ENCODE measurements at regions of chr2 and their contacts with region 1.

Region 1: GRCh38 chr2:159712143-159712928 is at the start of gene MARCHF7:
- DNase-seq: peak; percentile 91 to 99
- H3K4me3 ChIP-seq: peak within 1 kb of the TSS; percentile 84 to 96 (median 92)
- H3K27ac ChIP-seq: peak within 1 kb of the TSS; percentile 99
- H3K4me1 ChIP-seq: peaks cover 0 to 8% (median 4%) of the 10 kb centered on the region in 4 experiments; a peak in 3 of 7 replicates
- H3K27me3 ChIP-seq: no peaks in the 10 kb centered on the region
- CTCF ChIP-seq: peak; percentile 24 to 45 (median 41)
- EP300 ChIP-seq: no peak; a peak in 1 of 3 replicates
- POLR2A ChIP-seq: peak; percentile 95 to 99
- RAD21 ChIP-seq: peak; percentile 64 to 70
- total RNA-seq, gene MARCHF7: 108 and 116 TPM in 2 replicates

Region 2: GRCh38 chr2:159609811-159610432 is 102.4 kb before region 1 on chr2:
- CTCF ChIA-PET with region 1: interaction called, 3 read pairs
- POLR2A ChIA-PET with region 1: interaction called, 75 read pairs
- DNase-seq: no peak
- H3K4me3 ChIP-seq: peak overlapping the region in 1 of 4 experiments; percentile 4; a peak in 1 of 8 replicates
- H3K27ac ChIP-seq: no peak overlapping the region
- H3K4me1 ChIP-seq: peaks cover 0 to 22% (median 7%) of the 10 kb centered on the region in 4 experiments; a peak in 4 of 7 replicates
- H3K27me3 ChIP-seq: no peaks in the 10 kb centered on the region
- CTCF ChIP-seq: no peak
- EP300 ChIP-seq: no peak
- POLR2A ChIP-seq: peak in 1 of 2 experiments; percentile 22; a peak in 1 of 3 replicates
- RAD21 ChIP-seq: no peak

Region 3: GRCh38 chr2:159615140-159615951 is 97.0 kb before region 1 on chr2:
- CTCF ChIA-PET with region 1: interaction called, 3 read pairs
- POLR2A ChIA-PET with region 1: interaction called, 75 read pairs
- DNase-seq: peak; percentile 77 to 85
- H3K4me3 ChIP-seq: peak overlapping the region; percentile 73 to 98 (median 86)
- H3K27ac ChIP-seq: peak overlapping the region; percentile 95
- H3K4me1 ChIP-seq: peaks cover 0 to 10% (median 2%) of the 10 kb centered on the region in 4 experiments; a peak in 2 of 7 replicates
- H3K27me3 ChIP-seq: no peaks in the 10 kb centered on the region
- CTCF ChIP-seq: no peak
- EP300 ChIP-seq: no peak
- POLR2A ChIP-seq: peak; percentile 71 to 82
- RAD21 ChIP-seq: peak in 1 of 2 experiments; percentile 9; a peak in 1 of 4 replicates

Region 4: GRCh38 chr2:159637971-159638501 is 74.3 kb before region 1 on chr2:
- CTCF ChIA-PET with region 1: no interaction called
- POLR2A ChIA-PET with region 1: no interaction called
- DNase-seq: no peak
- H3K4me3 ChIP-seq: no peak overlapping the region
- H3K27ac ChIP-seq: no peak overlapping the region
- H3K4me1 ChIP-seq: peaks cover 0 to 4% (median 1%) of the 10 kb centered on the region in 4 experiments; a peak in 2 of 7 replicates
- H3K27me3 ChIP-seq: no peaks in the 10 kb centered on the region
- CTCF ChIP-seq: no peak
- EP300 ChIP-seq: no peak
- POLR2A ChIP-seq: no peak
- RAD21 ChIP-seq: no peak

Region 5: DNA sequence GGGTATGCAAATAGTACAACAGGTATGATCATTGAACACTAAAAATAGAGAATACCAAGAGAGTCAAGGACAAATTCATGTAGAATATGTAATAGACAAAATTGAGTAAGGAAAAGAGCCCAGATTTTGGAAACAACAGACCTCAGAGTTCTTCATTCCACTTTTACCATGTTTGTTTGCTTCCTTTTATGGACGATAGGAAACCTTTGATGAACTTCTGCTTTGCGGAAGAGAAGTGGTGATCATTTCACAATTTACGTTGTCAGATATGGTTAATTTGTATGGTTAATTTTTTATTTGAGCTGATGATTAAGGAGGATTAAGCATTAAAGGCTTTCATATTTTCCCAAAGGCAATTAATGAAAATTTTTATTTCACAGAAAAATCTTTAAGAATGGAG is 16.3 kb after region 1 on chr2:
- CTCF ChIA-PET with region 1: interaction called, 4 read pairs
- POLR2A ChIA-PET with region 1: interaction called, 42 read pairs
- DNase-seq: no peak
- H3K4me3 ChIP-seq: no peak overlapping the region
- H3K27ac ChIP-seq: no peak overlapping the region
- H3K4me1 ChIP-seq: no peaks in the 10 kb centered on the region
- H3K27me3 ChIP-seq: no peaks in the 10 kb centered on the region
- CTCF ChIP-seq: no peak
- EP300 ChIP-seq: no peak
- POLR2A ChIP-seq: no peak
- RAD21 ChIP-seq: no peak

Region 6: DNA sequence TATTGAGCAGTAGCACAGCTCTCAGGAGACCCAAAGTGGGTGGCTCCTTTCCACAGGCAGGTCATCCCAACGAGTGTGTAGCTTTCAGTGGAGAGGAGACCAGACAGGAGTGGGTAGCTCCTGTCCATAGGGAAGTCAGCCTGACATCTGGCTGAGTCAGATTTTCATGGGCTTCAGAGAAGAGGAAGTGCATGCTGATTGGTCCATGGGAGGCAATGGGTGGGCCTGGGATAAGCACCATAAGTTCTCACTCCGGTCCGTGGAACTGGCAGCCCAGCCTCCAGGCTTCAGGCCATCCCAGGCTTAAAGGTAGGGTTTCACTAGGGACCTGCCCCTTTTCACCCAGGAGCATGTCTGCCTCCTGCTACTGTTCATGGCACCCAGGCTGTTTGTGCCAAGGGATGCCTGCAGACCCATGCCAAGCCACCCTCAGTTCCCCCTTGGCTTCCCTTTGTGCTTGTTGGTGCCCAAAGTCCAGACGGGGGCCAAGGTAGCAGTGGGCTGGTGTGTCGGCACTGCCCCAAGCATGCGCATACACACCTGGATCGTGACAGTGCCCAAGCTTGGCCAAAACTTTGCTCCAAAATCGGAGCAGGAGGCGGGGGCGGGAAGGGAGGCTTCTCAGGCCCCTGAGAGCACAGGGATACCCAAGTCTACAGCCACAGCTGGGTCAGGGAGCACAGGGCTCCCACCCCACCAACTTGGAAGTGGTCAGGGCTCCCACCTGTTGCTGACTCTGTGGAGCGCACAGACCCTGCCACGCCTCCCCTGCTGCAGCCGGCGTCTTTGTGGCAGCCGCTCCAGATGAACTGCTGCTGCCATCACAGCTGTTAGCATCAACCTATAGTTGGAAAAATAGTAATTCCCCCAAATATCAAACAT is 26.4 kb after region 1 on chr2:
- CTCF ChIA-PET with region 1: no interaction called
- POLR2A ChIA-PET with region 1: interaction called, 12 read pairs
- DNase-seq: no peak
- H3K4me3 ChIP-seq: no peak overlapping the region
- H3K27ac ChIP-seq: no peak overlapping the region
- H3K4me1 ChIP-seq: no peaks in the 10 kb centered on the region; a peak in 2 of 7 replicates
- H3K27me3 ChIP-seq: no peaks in the 10 kb centered on the region
- CTCF ChIP-seq: no peak
- EP300 ChIP-seq: no peak
- POLR2A ChIP-seq: no peak
- RAD21 ChIP-seq: no peak